ENCODE measurements at regions of chr9 and their contacts with region 1.

Region 1: GRCh38 chr9:99819856-99820684 is 1.6 kb upstream of the NR4A3 start:
- DNase-seq: peak; percentile 48
- ATAC-seq: peak; percentile 49
- H3K4me3 ChIP-seq: peak overlapping the region; percentile 91
- H3K27ac ChIP-seq: peak overlapping the region; percentile 92
- H3K4me1 ChIP-seq: peaks cover 17% of the 10 kb centered on the region
- H3K27me3 ChIP-seq: peaks cover 0 to 4% of the 10 kb centered on the region in 2 experiments; a peak in 2 of 4 replicates
- CTCF ChIP-seq: peak in 1 of 3 experiments; percentile 30; a peak in 2 of 6 replicates
- EP300 ChIP-seq: peak; percentile 80; a peak in 3 of 4 replicates
- POLR2A ChIP-seq: no peak; the same call in none of the 2 replicates
- RAD21 ChIP-seq: no peak

Region 2: DNA sequence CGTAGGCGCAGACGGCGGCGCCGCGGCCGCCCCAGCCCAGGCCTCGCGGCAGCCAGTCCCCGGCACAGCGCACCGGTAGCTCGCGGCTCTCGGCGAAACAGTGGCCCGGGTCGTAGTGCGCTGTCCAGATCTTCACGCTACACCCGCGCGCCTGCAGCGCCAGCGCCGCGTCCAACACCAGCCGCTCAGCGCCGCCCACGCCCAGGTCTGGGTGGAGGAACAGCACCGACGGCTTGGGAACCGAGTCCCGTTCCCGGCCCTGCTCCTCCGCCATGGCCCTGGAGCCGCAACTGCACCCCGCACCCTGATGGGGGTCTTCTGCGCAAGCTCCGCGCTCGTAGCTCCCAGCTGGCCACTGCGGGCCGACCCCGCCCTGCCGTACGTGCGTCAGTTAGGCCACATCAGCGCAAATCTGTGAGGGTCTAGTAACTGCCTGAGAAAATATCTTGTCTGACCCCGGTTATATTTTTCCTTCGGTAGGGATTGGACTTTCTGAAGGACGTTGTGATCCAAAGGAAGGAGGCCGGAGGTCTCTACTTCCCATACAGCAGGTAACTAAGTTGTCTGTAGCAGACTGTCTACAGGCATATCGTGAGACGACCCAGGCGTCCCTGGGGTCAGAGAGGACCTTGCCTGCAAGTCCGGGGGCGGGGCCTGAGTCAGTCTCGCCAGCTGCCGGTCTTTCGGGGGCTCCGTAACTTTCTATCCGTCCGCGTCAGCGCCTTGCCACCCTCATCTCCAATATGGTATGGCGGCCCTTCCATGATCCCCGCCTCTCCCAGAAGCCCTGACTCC is 598.3 kb before region 1 on chr9 and contains the starts of genes ALG2 and SEC61B:
- CTCF ChIA-PET with region 1: no interaction called
- POLR2A ChIA-PET with region 1: no interaction called
- RAD21 ChIA-PET with region 1: interaction called, 3 read pairs
- SMC1A ChIA-PET with region 1: interaction called, 4 read pairs
- in situ Hi-C with region 1: no loop called
- intact Hi-C with region 1: loop called (anchors 5 kb)
- DNase-seq: peak; percentile 94
- ATAC-seq: peak; percentile 91
- H3K4me3 ChIP-seq: peak within 1 kb of the TSS; percentile 97
- H3K27ac ChIP-seq: peak within 1 kb of the TSS; percentile 99
- H3K4me1 ChIP-seq: peaks cover 9% of the 10 kb centered on the region
- H3K27me3 ChIP-seq: no peaks in the 10 kb centered on the region
- CTCF ChIP-seq: no peak
- EP300 ChIP-seq: peak in 1 of 2 experiments; percentile 51; a peak in 1 of 4 replicates
- POLR2A ChIP-seq: peak; percentile 97
- RAD21 ChIP-seq: no peak
- polyA plus RNA-seq, gene ALG2: 8.8 to 17.8 TPM
- polyA plus RNA-seq, gene SEC61B: 108 to 229 TPM

Region 3: GRCh38 chr9:99299211-99300102 is 520.6 kb before region 1 on chr9:
- CTCF ChIA-PET with region 1: interaction called, 3 read pairs
- POLR2A ChIA-PET with region 1: no interaction called
- RAD21 ChIA-PET with region 1: no interaction called
- SMC1A ChIA-PET with region 1: interaction called, 3 read pairs
- in situ Hi-C with region 1: no loop called
- intact Hi-C with region 1: loop called (anchors 5 kb)
- DNase-seq: no peak
- ATAC-seq: peak; percentile 55
- H3K4me3 ChIP-seq: no peak overlapping the region
- H3K27ac ChIP-seq: no peak overlapping the region
- H3K4me1 ChIP-seq: no peaks in the 10 kb centered on the region
- H3K27me3 ChIP-seq: no peaks in the 10 kb centered on the region
- CTCF ChIP-seq: peak in 2 of 3 experiments; percentile 15 to 39; a peak in 2 of 6 replicates
- EP300 ChIP-seq: no peak
- POLR2A ChIP-seq: no peak
- RAD21 ChIP-seq: peak; percentile 61

Region 4: GRCh38 chr9:99319048-99319447 is 501.0 kb before region 1 on chr9:
- CTCF ChIA-PET with region 1: no interaction called
- POLR2A ChIA-PET with region 1: no interaction called
- RAD21 ChIA-PET with region 1: no interaction called
- SMC1A ChIA-PET with region 1: no interaction called
- in situ Hi-C with region 1: no loop called
- intact Hi-C with region 1: no loop called
- DNase-seq: no peak
- ATAC-seq: no peak
- H3K4me3 ChIP-seq: no peak overlapping the region
- H3K27ac ChIP-seq: no peak overlapping the region
- H3K4me1 ChIP-seq: no peaks in the 10 kb centered on the region
- H3K27me3 ChIP-seq: no peaks in the 10 kb centered on the region
- CTCF ChIP-seq: no peak
- EP300 ChIP-seq: no peak
- POLR2A ChIP-seq: no peak
- RAD21 ChIP-seq: no peak

Region 5: GRCh38 chr9:99807276-99807852 is 12.7 kb before region 1 on chr9:
- CTCF ChIA-PET with region 1: interaction called, 6 read pairs
- POLR2A ChIA-PET with region 1: no interaction called
- RAD21 ChIA-PET with region 1: interaction called, 16 read pairs
- SMC1A ChIA-PET with region 1: interaction called, 13 read pairs
- in situ Hi-C with region 1: no loop called
- intact Hi-C with region 1: no loop called
- DNase-seq: no peak
- ATAC-seq: peak; percentile 87
- H3K4me3 ChIP-seq: no peak overlapping the region
- H3K27ac ChIP-seq: no peak overlapping the region
- H3K4me1 ChIP-seq: peaks cover 6% of the 10 kb centered on the region
- H3K27me3 ChIP-seq: no peaks in the 10 kb centered on the region
- CTCF ChIP-seq: peak; percentile 73 to 81 (median 75)
- EP300 ChIP-seq: no peak
- POLR2A ChIP-seq: no peak
- RAD21 ChIP-seq: peak; percentile 89

Region 6: DNA sequence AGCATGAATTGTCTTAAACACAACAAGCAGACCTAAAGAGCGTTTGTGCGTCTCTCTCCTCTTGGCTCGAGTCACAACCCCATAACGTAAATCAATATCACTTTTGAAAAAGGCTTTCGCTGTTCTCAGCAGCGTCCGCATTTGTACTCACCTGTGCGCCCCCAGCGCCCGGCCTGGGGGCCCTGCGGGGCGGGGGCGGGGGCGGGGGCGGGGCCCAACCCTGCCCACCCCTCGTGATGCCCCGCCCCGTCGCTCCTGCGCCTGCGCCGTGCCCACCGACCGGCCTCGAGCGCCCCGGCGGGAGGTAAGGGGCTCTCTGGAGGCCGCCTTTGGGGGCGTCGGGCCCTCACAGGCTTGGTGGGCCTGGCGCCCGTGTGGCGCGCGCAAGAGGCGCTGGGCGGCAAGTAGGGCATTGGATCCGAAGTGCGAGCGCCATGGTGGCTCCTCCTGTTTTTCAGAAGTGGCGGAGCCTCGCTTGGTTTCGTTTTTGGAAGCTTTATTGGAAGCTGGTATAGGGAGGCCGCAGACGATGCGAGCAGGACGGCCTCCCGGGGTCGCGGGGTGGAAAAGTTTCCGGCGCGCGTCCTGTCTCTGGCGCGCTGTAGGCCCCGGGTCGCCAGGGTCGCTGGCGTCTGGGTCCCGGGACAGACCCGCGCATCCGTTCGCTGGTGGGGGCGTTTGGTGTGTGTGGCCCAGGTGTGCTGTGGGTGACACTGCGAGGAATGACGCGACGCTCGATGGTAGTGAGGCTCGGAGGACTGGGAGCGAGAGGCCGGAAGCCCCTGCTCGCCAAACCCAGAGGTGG is 86.5 kb after region 1 on chr9 and contains the start of gene STX17:
- CTCF ChIA-PET with region 1: interaction called, 14 read pairs
- POLR2A ChIA-PET with region 1: no interaction called
- RAD21 ChIA-PET with region 1: interaction called, 8 read pairs
- SMC1A ChIA-PET with region 1: interaction called, 4 read pairs
- in situ Hi-C with region 1: no loop called
- intact Hi-C with region 1: loop called (anchors 2 kb)
- DNase-seq: peak; percentile 16
- ATAC-seq: peak; percentile 93
- H3K4me3 ChIP-seq: peak within 1 kb of the TSS; percentile 91
- H3K27ac ChIP-seq: peak within 1 kb of the TSS; percentile 92
- H3K4me1 ChIP-seq: peaks cover 5% of the 10 kb centered on the region; the same call in 1 of the 2 replicates
- H3K27me3 ChIP-seq: no peaks in the 10 kb centered on the region
- CTCF ChIP-seq: 0 out of 6 replicates have a peak, but pooled peaks of 1 of the 3 experiments have one; percentile 3
- EP300 ChIP-seq: no peak
- POLR2A ChIP-seq: peak; percentile 85
- RAD21 ChIP-seq: no peak
- polyA plus RNA-seq, gene STX17: 15.1 to 19.4 TPM

Region 7: GRCh38 chr9:100084734-100085133 is 264.7 kb after region 1 on chr9:
- CTCF ChIA-PET with region 1: interaction called, 4 read pairs
- POLR2A ChIA-PET with region 1: interaction called, 3 read pairs
- RAD21 ChIA-PET with region 1: interaction called, 6 read pairs
- SMC1A ChIA-PET with region 1: interaction called, 4 read pairs
- in situ Hi-C with region 1: no loop called
- intact Hi-C with region 1: loop called (anchors 5 kb)
- DNase-seq: peak; percentile 71
- ATAC-seq: peak; percentile 86
- H3K4me3 ChIP-seq: no peak overlapping the region
- H3K27ac ChIP-seq: peak overlapping the region; percentile 94
- H3K4me1 ChIP-seq: peaks cover 32% of the 10 kb centered on the region
- H3K27me3 ChIP-seq: no peaks in the 10 kb centered on the region
- CTCF ChIP-seq: no peak
- EP300 ChIP-seq: peak; percentile 95 to 99
- POLR2A ChIP-seq: no peak
- RAD21 ChIP-seq: no peak